HEK293 (cell line): ENCODE measurements at regions of chr5 and their contacts with region 1.

Region 1: GRCh38 chr5:146541958-146542849 is 26.2 kb upstream of the GPR151 start:
- H3K4me3 ChIP-seq: no peak overlapping the region
- H3K27ac ChIP-seq: no peak overlapping the region
- H3K4me1 ChIP-seq: no peaks in the 10 kb centered on the region
- CTCF ChIP-seq: peak; percentile 69

Region 2: DNA sequence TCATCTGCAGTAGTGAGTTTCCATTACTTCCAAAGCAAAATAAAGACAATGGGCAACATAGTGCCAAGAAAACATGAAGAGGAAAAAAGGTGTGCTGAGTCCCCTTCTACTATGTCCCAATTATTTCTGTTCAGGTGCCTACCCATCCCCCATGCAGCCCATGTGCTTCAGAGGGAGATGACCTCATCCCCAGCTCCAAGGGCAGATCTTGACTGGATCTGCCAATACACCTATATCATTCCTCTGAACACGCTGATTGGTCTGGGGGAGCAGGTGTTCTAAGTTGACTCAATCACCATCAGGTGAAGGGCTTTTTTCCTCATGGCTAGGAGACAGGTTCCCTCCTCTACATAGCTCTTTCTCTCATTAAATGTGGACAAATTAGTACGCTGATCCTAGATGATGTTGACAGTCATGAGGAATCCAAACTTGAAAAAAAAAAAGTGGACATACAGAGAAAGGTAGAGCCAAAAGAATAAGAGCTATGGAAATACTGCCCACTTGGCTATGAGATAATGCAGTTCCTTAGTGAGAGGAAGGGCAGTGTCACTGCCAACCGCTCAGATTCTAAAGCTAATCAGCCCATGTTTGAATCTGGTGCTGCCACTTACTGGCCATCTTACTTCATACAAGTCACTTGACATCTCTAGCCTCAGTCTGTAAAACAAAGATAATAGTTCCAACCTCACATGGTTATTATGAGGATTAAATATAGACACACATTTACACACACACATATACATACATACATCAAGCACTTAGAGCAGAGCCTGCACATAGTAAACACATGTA is 730.2 kb before region 1 on chr5:
- CTCF ChIA-PET with region 1: no interaction called
- POLR2A ChIA-PET with region 1: no interaction called
- H3K4me3 ChIP-seq: no peak overlapping the region
- H3K27ac ChIP-seq: no peak overlapping the region
- H3K4me1 ChIP-seq: no peaks in the 10 kb centered on the region
- CTCF ChIP-seq: peak; percentile 38; the same call in 1 of the 2 replicates

Region 3: GRCh38 chr5:146409054-146409671 is 133.0 kb before region 1 on chr5:
- CTCF ChIA-PET with region 1: no interaction called
- POLR2A ChIA-PET with region 1: no interaction called
- H3K4me3 ChIP-seq: no peak overlapping the region
- H3K27ac ChIP-seq: no peak overlapping the region
- H3K4me1 ChIP-seq: no peaks in the 10 kb centered on the region; the same call in 1 of the 2 replicates
- CTCF ChIP-seq: no peak

Region 4: DNA sequence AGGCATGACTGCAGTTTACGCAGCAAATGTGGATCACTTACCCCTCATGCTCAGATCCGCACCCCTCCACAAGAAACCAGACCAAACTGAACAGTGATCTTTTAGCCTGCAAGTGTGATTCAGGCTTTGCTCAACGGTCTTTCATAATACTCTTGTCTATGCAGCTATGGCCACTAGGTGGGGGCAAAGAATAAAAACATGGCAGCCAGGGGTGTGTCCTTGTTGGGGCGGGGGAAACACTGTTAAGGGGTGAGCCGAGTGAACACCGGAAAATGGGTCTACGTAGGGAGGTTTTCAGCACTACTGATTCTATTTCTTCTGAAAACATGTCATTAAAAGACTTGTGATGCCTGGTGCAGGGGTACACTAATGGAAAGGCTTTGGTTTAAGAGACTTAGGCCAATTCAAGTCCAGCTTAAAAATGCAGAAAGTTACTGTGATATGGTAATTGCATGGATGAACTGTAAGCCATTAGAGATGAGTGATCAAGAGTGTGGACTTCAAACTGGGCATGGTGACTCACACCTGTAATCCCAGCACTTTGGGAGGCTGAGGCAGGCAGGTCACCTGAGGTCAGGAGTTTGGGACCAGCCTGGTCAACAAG is 23.7 kb after region 1 on chr5:
- CTCF ChIA-PET with region 1: interaction called, 10 read pairs
- POLR2A ChIA-PET with region 1: no interaction called
- H3K4me3 ChIP-seq: no peak overlapping the region
- H3K27ac ChIP-seq: no peak overlapping the region
- H3K4me1 ChIP-seq: no peaks in the 10 kb centered on the region
- CTCF ChIP-seq: peak; percentile 46; the same call in 1 of the 2 replicates